Naive thymus-derived CD4-positive, alpha-beta T cell (primary cell): ENCODE measurements at regions of chrX and their contacts with region 1.

Region 1: GRCh38 chrX:101759000-101759399 is 99.3 kb upstream of the ARMCX2 start:
- DNase-seq: peak in 7 of 9 donors; percentile 8 to 43 (median 27)
- ATAC-seq: peak; percentile 78
- H3K4me3 ChIP-seq: no peak overlapping the region
- H3K4me3 Mint-ChIP-seq: no peak overlapping the region
- H3K27ac ChIP-seq: no peak overlapping the region
- H3K27ac Mint-ChIP-seq: no peak overlapping the region
- H3K4me1 ChIP-seq: no peaks in the 10 kb centered on the region
- H3K4me1 Mint-ChIP-seq: peaks cover 0 to 3% (median 0%) of the 10 kb centered on the region in 7 donors
- H3K27me3 ChIP-seq: no peaks in the 10 kb centered on the region
- H3K27me3 Mint-ChIP-seq: peaks cover 0 to 7% (median 5%) of the 10 kb centered on the region in 5 donors

Region 2: GRCh38 chrX:101595739-101596419 is 163.1 kb before region 1 on chrX:
- CTCF ChIA-PET with region 1: interaction called, 5 read pairs
- POLR2A ChIA-PET with region 1: no interaction called
- intact Hi-C with region 1: loop called (anchors 5 kb)
- DNase-seq: peak in 7 of 9 donors; percentile 32 to 70 (median 54)
- ATAC-seq: peak; percentile 86
- H3K4me3 ChIP-seq: no peak overlapping the region
- H3K4me3 Mint-ChIP-seq: no peak overlapping the region
- H3K27ac ChIP-seq: no peak overlapping the region
- H3K27ac Mint-ChIP-seq: no peak overlapping the region
- H3K4me1 ChIP-seq: no peaks in the 10 kb centered on the region
- H3K4me1 Mint-ChIP-seq: no peaks in the 10 kb centered on the region
- H3K27me3 ChIP-seq: no peaks in the 10 kb centered on the region
- H3K27me3 Mint-ChIP-seq: peaks cover 7 to 22% (median 12%) of the 10 kb centered on the region in 5 donors

Region 3: GRCh38 chrX:101617211-101618191 is 141.5 kb before region 1 on chrX and contains the start of gene ARMCX6:
- CTCF ChIA-PET with region 1: no interaction called
- POLR2A ChIA-PET with region 1: no interaction called
- intact Hi-C with region 1: loop called in 1 of 2 experiments (anchors 5 kb)
- DNase-seq: peak; percentile 39 to 80 (median 63)
- ATAC-seq: peak; percentile 92
- H3K4me3 ChIP-seq: peak within 1 kb of the TSS; percentile 77
- H3K4me3 Mint-ChIP-seq: peak within 1 kb of the TSS; percentile 89 to 97 (median 92)
- H3K27ac ChIP-seq: peak within 1 kb of the TSS; percentile 79
- H3K27ac Mint-ChIP-seq: peak within 1 kb of the TSS; percentile 71 to 97 (median 94)
- H3K4me1 ChIP-seq: peaks cover 4 to 9% of the 10 kb centered on the region in 2 donors
- H3K4me1 Mint-ChIP-seq: peaks cover 0 to 24% (median 15%) of the 10 kb centered on the region in 7 donors
- H3K27me3 ChIP-seq: no peaks in the 10 kb centered on the region
- H3K27me3 Mint-ChIP-seq: no peaks in the 10 kb centered on the region
- total RNA-seq, gene ARMCX6: 27.3 to 42.5 (median 39.9) TPM